WTC11 (cell line): ENCODE measurements at regions of chr20 and their contacts with region 1.

Region 1: DNA sequence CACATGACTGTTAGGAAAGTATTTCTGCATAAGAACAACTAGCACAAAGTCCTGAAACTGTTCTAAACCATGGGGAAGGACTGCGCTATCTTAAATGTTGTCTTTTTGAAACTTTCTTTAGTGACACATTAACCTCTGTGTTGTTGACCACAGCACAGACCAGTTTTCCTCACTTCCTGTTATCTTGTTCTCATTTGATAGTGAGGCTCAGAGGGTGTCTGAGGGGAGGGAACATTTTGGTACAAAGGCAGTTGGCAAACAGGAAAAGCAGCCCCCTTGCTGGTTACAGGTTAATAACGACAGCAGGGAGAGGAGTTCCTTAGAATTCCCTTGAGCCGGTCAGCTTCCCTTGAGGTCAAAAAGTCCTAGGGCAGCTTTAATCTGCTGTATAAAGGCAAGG is 143.5 kb upstream of the BMP2 start:
- DNase-seq: no peak
- ATAC-seq: peak; percentile 93
- H3K4me3 Mint-ChIP-seq: no peak overlapping the region
- H3K27ac Mint-ChIP-seq: no peak overlapping the region
- H3K4me1 Mint-ChIP-seq: peaks cover 12% of the 10 kb centered on the region
- H3K27me3 Mint-ChIP-seq: no peaks in the 10 kb centered on the region
- CTCF ChIP-seq: no peak

Region 2: DNA sequence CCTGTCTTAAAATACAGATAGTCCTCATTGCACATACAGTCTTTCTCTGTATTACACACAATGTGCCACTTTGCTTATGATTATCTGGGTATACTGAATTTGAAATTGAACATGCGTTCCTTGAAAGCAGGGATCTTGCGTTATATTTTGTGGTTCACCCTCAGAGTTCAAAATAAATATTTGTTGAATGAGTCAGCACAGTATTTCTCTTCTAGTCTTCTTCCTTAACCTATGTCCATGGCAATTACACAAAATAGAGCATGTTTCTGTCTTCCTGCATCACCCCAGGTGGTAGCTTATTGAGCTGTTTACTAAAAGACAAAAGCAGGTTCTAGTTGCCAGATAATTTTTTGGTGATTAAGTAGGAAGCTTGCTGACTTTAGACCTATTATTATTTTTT is 228.3 kb before region 1 on chr20:
- CTCF ChIA-PET with region 1: no interaction called
- POLR2A ChIA-PET with region 1: no interaction called
- DNase-seq: no peak
- ATAC-seq: no peak
- H3K4me3 Mint-ChIP-seq: no peak overlapping the region
- H3K27ac Mint-ChIP-seq: no peak overlapping the region
- H3K4me1 Mint-ChIP-seq: peaks cover 37% of the 10 kb centered on the region
- H3K27me3 Mint-ChIP-seq: no peaks in the 10 kb centered on the region
- CTCF ChIP-seq: no peak

Region 3: DNA sequence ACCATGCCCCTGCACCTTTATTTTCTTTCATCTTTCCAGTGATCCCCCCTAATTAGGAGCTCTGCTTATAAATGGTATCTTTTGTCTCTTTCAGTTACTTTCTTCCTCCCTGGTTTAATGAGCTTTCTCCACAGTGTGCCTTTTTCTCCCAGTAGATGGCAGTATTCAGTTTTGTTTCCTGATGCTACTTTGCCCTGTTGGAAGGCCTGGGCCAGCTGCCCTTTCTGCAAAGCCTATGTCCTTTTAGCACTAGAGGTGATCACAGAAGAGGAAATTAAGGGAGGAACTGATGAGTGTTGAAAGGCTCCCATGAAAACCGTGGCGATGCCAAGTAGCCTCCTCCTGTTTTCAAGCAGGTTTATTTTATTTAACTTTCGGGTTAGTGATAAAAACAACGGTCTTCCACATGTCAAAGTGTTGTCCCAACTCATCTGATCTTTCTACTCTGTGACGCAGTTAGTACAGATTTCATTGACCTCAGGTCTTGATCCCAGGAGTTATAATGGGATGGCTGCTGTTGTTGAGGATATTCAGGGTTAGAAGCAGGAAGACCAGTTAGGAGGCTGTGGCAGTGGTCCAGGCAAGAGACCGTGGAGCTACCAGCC is 40.8 kb before region 1 on chr20:
- CTCF ChIA-PET with region 1: interaction called, 13 read pairs
- POLR2A ChIA-PET with region 1: no interaction called
- DNase-seq: peak; percentile 36
- ATAC-seq: peak; percentile 95
- H3K4me3 Mint-ChIP-seq: no peak overlapping the region
- H3K27ac Mint-ChIP-seq: no peak overlapping the region
- H3K4me1 Mint-ChIP-seq: peaks cover 7% of the 10 kb centered on the region; the same call in 1 of the 2 replicates
- H3K27me3 Mint-ChIP-seq: no peaks in the 10 kb centered on the region
- CTCF ChIP-seq: peak; percentile 59

Region 4: DNA sequence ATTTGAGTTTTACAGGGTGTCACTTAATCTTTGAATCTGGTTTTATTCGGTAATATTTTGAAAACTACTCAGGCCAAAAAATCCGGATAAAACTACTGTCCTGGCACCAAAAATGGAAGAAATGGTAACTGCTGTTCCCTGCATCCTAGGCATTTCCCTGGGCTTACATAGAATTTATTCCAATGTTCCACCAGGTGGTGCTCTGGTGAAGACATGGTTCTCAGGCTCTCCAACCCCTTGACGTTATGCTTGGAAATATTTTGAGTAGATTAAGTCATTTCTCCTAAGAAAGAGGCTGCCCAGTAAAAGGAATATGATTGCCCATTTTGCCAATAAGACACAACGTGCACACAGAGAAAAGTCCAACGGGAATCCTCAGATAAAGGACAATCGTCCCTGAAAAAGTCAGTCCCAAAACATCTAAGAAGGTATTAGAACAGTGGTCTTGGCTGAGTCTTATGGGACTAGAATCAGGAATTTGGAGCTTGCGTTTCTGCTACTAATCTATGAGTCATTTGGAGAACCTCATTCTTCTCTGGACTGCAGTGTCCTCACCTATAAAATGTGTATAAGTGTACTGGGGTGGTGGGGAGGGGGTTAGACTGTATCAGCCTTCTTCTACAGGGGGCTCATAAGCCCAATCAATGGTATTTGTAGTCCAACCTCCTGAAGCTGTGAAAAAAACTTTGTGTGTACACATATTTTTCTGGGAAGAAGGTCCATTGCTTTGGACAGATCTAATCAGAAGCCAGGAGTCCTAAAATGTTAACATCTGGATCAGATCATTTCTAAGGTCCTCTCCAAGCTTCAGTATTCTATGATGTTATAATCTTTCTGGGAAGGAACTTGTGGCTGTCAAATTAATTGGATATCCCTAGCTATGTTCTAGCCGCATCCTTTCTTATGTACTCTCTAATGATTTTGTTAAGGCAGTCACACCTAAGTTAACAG is 12.5 kb after region 1 on chr20:
- CTCF ChIA-PET with region 1: interaction called, 20 read pairs
- POLR2A ChIA-PET with region 1: no interaction called
- DNase-seq: no peak
- ATAC-seq: peak; percentile 78
- H3K4me3 Mint-ChIP-seq: no peak overlapping the region
- H3K27ac Mint-ChIP-seq: peak overlapping the region; percentile 26
- H3K4me1 Mint-ChIP-seq: peaks cover 16% of the 10 kb centered on the region
- H3K27me3 Mint-ChIP-seq: no peaks in the 10 kb centered on the region
- CTCF ChIP-seq: no peak

Region 5: GRCh38 chr20:6838181-6838826 is 214.3 kb after region 1 on chr20:
- CTCF ChIA-PET with region 1: no interaction called
- POLR2A ChIA-PET with region 1: no interaction called
- DNase-seq: no peak
- ATAC-seq: 0 out of 2 replicates have a peak, but pooled peaks have one; percentile 26
- H3K4me3 Mint-ChIP-seq: no peak overlapping the region
- H3K27ac Mint-ChIP-seq: no peak overlapping the region
- H3K4me1 Mint-ChIP-seq: peaks cover 32% of the 10 kb centered on the region
- H3K27me3 Mint-ChIP-seq: no peaks in the 10 kb centered on the region
- CTCF ChIP-seq: no peak